ENCODE measurements at regions of chr14 and their contacts with region 1.

Region 1: GRCh38 chr14:21024585-21025370 is at the start of gene NDRG2:
- DNase-seq: peak; percentile 50 to 78 (median 67)
- ATAC-seq: peak; percentile 93
- H3K4me3 ChIP-seq: peak within 1 kb of the TSS; percentile 70
- H3K4me3 Mint-ChIP-seq: peak within 1 kb of the TSS; percentile 84 to 97 (median 92)
- H3K27ac ChIP-seq: peak within 1 kb of the TSS; percentile 70
- H3K27ac Mint-ChIP-seq: peak within 1 kb of the TSS in 8 of 9 donors; percentile 66 to 92 (median 80)
- H3K4me1 ChIP-seq: peaks cover 7 to 13% of the 10 kb centered on the region in 2 donors
- H3K4me1 Mint-ChIP-seq: peaks cover 7 to 28% (median 23%) of the 10 kb centered on the region in 7 donors
- H3K27me3 ChIP-seq: no peaks in the 10 kb centered on the region
- H3K27me3 Mint-ChIP-seq: peaks cover 0 to 47% (median 0%) of the 10 kb centered on the region in 5 donors
- total RNA-seq, gene NDRG2: 5.9 to 39.9 (median 35.2) TPM

Region 2: GRCh38 chr14:20989572-20990551 is 34.9 kb before region 1 on chr14 and contains the start of gene METTL17:
- CTCF ChIA-PET with region 1: no interaction called
- POLR2A ChIA-PET with region 1: interaction called, 7 read pairs
- intact Hi-C with region 1: loop called (anchors 1 to 2 kb)
- DNase-seq: peak; percentile 64 to 88 (median 81)
- ATAC-seq: peak; percentile 95
- H3K4me3 ChIP-seq: peak within 1 kb of the TSS; percentile 86
- H3K4me3 Mint-ChIP-seq: peak within 1 kb of the TSS; percentile 86 to 97 (median 92)
- H3K27ac ChIP-seq: peak within 1 kb of the TSS; percentile 77
- H3K27ac Mint-ChIP-seq: peak within 1 kb of the TSS; percentile 86 to 98 (median 95)
- H3K4me1 ChIP-seq: peaks cover 12 to 16% of the 10 kb centered on the region in 2 donors
- H3K4me1 Mint-ChIP-seq: peaks cover 0 to 46% (median 37%) of the 10 kb centered on the region in 7 donors
- H3K27me3 ChIP-seq: no peaks in the 10 kb centered on the region
- H3K27me3 Mint-ChIP-seq: no peaks in the 10 kb centered on the region
- total RNA-seq, gene METTL17: 75.4 to 129 (median 96.7) TPM

Region 3: GRCh38 chr14:21039585-21040369 is 15.0 kb after region 1 on chr14:
- CTCF ChIA-PET with region 1: interaction called, 178 read pairs
- POLR2A ChIA-PET with region 1: no interaction called
- intact Hi-C with region 1: loop called in 1 of 2 experiments (anchors 1 kb)
- DNase-seq: peak in 7 of 9 donors; percentile 17 to 55 (median 46)
- ATAC-seq: peak; percentile 69
- H3K4me3 ChIP-seq: no peak overlapping the region
- H3K4me3 Mint-ChIP-seq: no peak overlapping the region
- H3K27ac ChIP-seq: no peak overlapping the region
- H3K27ac Mint-ChIP-seq: no peak overlapping the region
- H3K4me1 ChIP-seq: no peaks in the 10 kb centered on the region
- H3K4me1 Mint-ChIP-seq: peaks cover 2 to 9% (median 8%) of the 10 kb centered on the region in 7 donors
- H3K27me3 ChIP-seq: no peaks in the 10 kb centered on the region
- H3K27me3 Mint-ChIP-seq: peaks cover 3 to 31% (median 11%) of the 10 kb centered on the region in 5 donors

Region 4: GRCh38 chr14:21071225-21072030 is 46.6 kb after region 1 on chr14:
- CTCF ChIA-PET with region 1: no interaction called
- POLR2A ChIA-PET with region 1: no interaction called
- intact Hi-C with region 1: loop called (anchors 2 to 5 kb)
- DNase-seq: peak in 1 of 9 donors; percentile 36
- ATAC-seq: peak; percentile 63
- H3K4me3 ChIP-seq: peak overlapping the region; percentile 43
- H3K4me3 Mint-ChIP-seq: peak overlapping the region; percentile 69 to 90 (median 82)
- H3K27ac ChIP-seq: no peak overlapping the region
- H3K27ac Mint-ChIP-seq: peak overlapping the region in 5 of 9 donors; percentile 51 to 76 (median 54)
- H3K4me1 ChIP-seq: peaks cover 21 to 29% of the 10 kb centered on the region in 2 donors
- H3K4me1 Mint-ChIP-seq: peaks cover 23 to 40% (median 35%) of the 10 kb centered on the region in 7 donors
- H3K27me3 ChIP-seq: peaks cover 20 to 36% of the 10 kb centered on the region in 2 donors
- H3K27me3 Mint-ChIP-seq: peaks cover 51 to 69% (median 61%) of the 10 kb centered on the region in 5 donors

Region 5: GRCh38 chr14:21092273-21093011 is 67.7 kb after region 1 on chr14:
- CTCF ChIA-PET with region 1: interaction called, 132 read pairs
- POLR2A ChIA-PET with region 1: interaction called, 3 read pairs
- intact Hi-C with region 1: loop called in 1 of 2 experiments (anchors 1 kb)
- DNase-seq: peak; percentile 82 to 98 (median 93)
- ATAC-seq: peak; percentile 90
- H3K4me3 ChIP-seq: no peak overlapping the region
- H3K4me3 Mint-ChIP-seq: peak overlapping the region in 1 of 10 donors; percentile 6
- H3K27ac ChIP-seq: no peak overlapping the region
- H3K27ac Mint-ChIP-seq: peak overlapping the region in 8 of 9 donors; percentile 17 to 88 (median 78)
- H3K4me1 ChIP-seq: peaks cover 6 to 14% of the 10 kb centered on the region in 2 donors
- H3K4me1 Mint-ChIP-seq: peaks cover 15 to 37% (median 27%) of the 10 kb centered on the region in 7 donors
- H3K27me3 ChIP-seq: no peaks in the 10 kb centered on the region
- H3K27me3 Mint-ChIP-seq: peaks cover 0 to 17% (median 0%) of the 10 kb centered on the region in 5 donors